ENCODE measurements at regions of chr14 and their contacts with region 1.

Region 1: DNA sequence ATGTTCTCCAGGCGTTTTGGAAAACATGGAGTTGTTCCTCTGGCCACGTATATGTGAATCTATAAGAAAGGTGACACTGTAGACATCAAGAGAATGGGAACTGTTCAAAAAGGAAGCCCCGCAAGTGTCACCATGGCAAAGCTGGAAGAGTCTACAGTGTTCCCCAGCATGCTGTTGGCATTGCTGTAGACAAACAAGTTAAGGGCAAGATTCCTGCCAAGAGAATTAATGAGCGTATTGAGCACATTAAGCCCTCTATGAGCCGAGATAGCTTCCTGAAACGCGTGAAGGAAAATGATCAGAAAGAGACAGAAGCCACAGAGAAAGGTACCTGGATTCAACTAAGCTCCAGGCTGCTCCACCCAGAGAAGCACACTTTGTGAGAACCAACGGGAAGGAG is 92.5 kb upstream of the EIF5 start:
- DNase-seq: no peak
- H3K4me3 ChIP-seq: no peak overlapping the region
- H3K27ac ChIP-seq: no peak overlapping the region
- H3K4me1 ChIP-seq: peaks cover 0 to 4% (median 0%) of the 10 kb centered on the region in 4 experiments; a peak in 2 of 7 replicates
- H3K27me3 ChIP-seq: no peaks in the 10 kb centered on the region
- CTCF ChIP-seq: no peak
- EP300 ChIP-seq: no peak
- POLR2A ChIP-seq: no peak
- RAD21 ChIP-seq: no peak

Region 2: DNA sequence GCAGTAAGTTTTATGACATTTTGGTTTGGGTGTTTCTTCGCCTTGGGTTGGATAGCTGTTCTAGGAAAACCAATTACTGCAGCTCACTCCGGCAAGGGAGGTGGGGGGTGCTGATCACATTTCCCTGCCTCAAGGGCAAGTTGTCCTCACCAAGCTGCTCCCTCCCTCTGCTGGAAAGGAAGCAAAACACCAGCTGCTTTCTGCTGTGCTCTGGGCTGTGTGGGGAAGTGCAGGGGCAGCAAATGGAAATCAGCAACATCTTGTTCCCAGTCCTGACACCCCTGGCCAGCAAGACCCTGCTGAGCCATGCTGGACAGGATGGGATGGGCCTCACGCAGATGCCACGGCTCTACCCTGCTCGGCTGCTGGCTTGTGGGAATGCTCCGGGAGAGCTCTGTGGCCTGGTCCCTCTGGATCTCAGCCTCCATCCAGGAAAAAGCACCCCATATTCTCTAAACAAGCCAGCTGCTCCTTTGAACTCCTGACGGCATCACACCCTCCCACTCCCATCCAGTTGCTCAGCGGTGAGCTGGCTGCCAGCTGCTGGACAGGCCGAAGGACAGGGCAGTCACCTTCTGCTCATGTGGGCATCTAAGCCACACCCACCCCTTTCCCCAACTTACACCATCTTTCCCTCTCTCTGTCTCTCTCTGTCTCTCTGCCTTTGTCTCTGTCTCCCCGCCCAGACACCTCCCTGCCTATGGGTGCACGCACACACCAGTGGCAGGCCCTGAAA is 40.1 kb after region 1 on chr14:
- CTCF ChIA-PET with region 1: interaction called, 14 read pairs
- POLR2A ChIA-PET with region 1: interaction called, 3 read pairs
- DNase-seq: no peak
- H3K4me3 ChIP-seq: no peak overlapping the region
- H3K27ac ChIP-seq: no peak overlapping the region
- H3K4me1 ChIP-seq: peaks cover 5 to 26% (median 15%) of the 10 kb centered on the region in 4 experiments
- H3K27me3 ChIP-seq: peaks cover 0 to 20% (median 11%) of the 10 kb centered on the region in 4 experiments; a peak in 5 of 7 replicates
- CTCF ChIP-seq: peak; percentile 57 to 78 (median 63)
- EP300 ChIP-seq: no peak
- POLR2A ChIP-seq: no peak
- RAD21 ChIP-seq: peak; percentile 60 to 68

Measured in H1 (cell line).